Prostate gland (tissue), 2 donors: ENCODE measurements at regions of chr12 and their contacts with region 1.

Region 1: DNA sequence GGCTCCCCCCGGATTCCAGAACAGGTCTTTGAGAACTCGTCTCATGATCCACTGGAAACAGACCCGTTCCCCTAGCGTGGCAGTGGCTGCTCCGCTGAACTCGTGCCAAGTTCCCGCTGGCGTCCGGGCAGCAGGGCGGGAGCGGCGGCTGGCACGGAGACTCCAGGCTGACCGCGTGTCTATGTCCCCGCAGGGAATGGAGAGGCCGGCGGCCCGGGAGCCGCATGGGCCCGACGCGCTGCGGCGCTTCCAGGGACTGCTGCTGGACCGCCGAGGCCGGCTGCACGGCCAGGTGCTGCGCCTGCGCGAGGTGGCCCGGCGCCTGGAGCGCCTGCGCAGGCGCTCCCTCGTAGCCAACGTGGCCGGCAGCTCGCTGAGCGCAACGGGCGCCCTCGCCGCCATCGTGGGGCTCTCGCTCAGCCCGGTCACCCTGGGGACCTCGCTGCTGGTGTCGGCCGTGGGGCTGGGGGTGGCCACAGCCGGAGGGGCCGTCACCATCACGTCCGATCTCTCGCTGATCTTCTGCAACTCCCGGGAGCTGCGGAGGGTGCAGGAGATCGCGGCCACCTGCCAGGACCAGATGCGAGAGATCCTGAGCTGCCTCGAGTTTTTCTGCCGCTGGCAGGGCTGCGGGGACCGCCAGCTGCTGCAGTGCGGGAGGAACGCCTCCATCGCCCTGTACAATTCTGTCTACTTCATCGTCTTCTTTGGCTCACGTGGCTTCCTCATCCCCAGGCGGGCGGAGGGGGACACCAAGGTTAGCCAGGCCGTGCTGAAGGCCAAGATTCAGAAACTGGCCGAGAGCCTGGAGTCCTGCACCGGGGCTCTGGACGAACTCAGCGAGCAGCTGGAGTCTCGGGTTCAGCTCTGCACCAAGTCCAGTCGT is 1.5 kb downstream of the APOLD1 start:
- DNase-seq: peak; percentile 68
- H3K4me3 ChIP-seq: peak overlapping the region; percentile 57 to 59
- H3K27ac ChIP-seq: peak overlapping the region; percentile 87 to 88
- H3K4me1 ChIP-seq: peaks cover 3% of the 10 kb centered on the region
- H3K27me3 ChIP-seq: no peaks in the 10 kb centered on the region
- CTCF ChIP-seq: peak in 2 of 4 experiments; percentile 44 to 45
- POLR2A ChIP-seq: peak; percentile 91

Region 2: DNA sequence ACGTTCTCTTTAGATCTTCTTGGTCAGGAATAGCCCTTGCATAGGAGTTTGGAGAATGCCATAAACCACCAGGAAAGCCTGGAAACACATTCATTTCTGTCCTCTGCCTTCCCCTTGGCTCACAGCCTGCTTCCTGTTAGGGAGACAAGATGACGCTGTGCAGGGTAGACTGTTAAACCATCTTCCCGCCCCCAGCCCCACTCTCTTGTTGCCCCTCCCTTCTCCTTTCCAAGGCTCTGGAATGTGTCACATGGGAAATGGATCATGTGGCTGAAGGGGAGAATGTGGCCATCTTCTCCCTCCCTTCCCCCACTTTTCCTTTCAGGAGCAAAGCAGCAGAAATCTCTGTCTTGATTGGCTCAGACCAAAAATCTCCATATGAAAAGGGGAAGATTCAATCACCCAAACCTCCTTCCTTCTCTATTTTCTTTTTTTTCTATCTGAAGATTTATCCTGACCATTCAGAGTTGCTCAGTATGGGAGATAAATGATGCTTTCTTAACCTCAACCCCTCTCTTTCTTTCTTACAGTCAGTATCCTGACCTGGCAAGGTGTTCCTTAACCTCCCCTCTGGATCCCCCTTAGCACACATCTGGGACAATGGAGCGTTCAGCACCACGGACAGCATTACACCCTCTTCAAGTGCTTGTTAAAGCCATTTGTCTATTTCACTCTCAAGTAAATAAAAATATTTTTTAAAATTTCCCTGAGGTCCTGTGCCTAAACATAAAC is 102.4 kb before region 1 on chr12:
- intact Hi-C with region 1: no loop called
- DNase-seq: no peak
- H3K4me3 ChIP-seq: no peak overlapping the region
- H3K27ac ChIP-seq: no peak overlapping the region
- H3K4me1 ChIP-seq: no peaks in the 10 kb centered on the region
- H3K27me3 ChIP-seq: peaks cover 4% of the 10 kb centered on the region
- CTCF ChIP-seq: no peak
- POLR2A ChIP-seq: no peak

Region 3: GRCh38 chr12:12724661-12725545 is 62.1 kb before region 1 on chr12:
- intact Hi-C with region 1: loop called (anchors 10 kb)
- DNase-seq: peak; percentile 94
- H3K4me3 ChIP-seq: peak overlapping the region; percentile 68 to 79
- H3K27ac ChIP-seq: peak overlapping the region; percentile 100
- H3K4me1 ChIP-seq: no peaks in the 10 kb centered on the region
- H3K27me3 ChIP-seq: no peaks in the 10 kb centered on the region
- CTCF ChIP-seq: peak in 1 of 4 experiments; percentile 5
- POLR2A ChIP-seq: peak; percentile 84

Region 4: DNA sequence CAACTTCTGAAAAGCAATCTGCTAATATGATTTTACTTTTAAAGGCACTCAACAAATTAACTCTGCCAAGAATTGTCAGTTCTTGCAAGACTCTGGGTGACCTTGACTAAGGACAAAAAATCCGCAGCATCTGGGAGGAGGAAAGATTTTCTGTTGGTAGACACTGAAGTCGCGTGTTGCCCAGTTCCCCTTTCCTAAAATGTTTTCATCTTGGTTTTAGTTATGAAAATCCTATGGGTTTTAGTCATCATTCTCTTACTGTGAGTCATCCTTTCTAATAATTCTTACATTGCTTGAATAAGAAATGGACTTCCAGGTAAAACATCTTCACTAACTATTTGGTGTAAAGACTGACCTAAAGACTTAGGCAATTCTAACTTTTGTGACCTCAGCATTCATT is 307.4 kb after region 1 on chr12:
- intact Hi-C with region 1: loop called (anchors 10 kb)
- DNase-seq: no peak
- H3K4me3 ChIP-seq: no peak overlapping the region
- H3K27ac ChIP-seq: no peak overlapping the region
- H3K4me1 ChIP-seq: peaks cover 5% of the 10 kb centered on the region
- H3K27me3 ChIP-seq: no peaks in the 10 kb centered on the region
- CTCF ChIP-seq: no peak
- POLR2A ChIP-seq: no peak

Region 5: DNA sequence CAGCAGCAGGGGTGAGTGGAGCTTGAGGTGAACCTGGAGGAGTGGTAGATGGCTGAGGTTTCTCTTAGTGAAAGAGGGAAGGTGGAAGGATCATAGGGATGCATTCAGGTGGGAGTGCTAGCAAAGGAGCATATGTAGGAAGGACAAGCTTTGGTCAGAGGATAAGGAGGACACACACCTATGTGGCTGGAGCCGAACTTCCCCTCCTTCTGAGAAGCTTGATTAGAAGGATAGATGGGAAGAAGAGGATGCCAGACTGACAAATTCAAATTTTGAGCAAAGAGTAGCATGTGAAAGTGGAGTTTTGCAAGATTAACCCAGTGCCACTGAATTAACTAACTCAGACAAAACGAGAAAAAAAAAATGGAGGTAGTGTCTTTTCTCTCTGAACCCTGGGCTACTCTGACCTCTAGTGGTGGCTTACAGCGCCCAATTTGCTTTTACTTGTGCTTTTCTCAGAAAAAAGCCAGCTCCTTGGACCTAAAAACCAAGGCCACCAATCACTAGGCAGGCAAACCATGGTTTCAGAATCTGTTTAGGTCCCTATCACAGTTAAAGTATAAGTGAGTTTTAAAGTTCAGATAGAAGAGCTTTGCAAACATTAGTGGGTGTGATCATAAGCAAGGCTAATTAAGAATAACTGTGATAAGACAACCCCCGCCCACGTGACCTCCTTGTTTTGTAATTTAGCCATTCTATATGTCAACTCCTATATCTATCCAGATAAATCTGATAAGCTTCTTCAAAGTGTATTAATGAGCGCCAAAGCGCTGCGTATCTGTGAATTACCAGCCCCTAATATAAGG is 425.1 kb after region 1 on chr12:
- intact Hi-C with region 1: loop called (anchors 10 kb)
- DNase-seq: peak; percentile 58
- H3K4me3 ChIP-seq: no peak overlapping the region
- H3K27ac ChIP-seq: no peak overlapping the region
- H3K4me1 ChIP-seq: no peaks in the 10 kb centered on the region
- H3K27me3 ChIP-seq: no peaks in the 10 kb centered on the region
- CTCF ChIP-seq: peak; percentile 43 to 80 (median 80)
- POLR2A ChIP-seq: no peak